Endothelial cell of umbilical vein (primary cell): ENCODE measurements at regions of chr17 and their contacts with region 1.

Region 1: GRCh38 chr17:39547713-39548478 is 59.8 kb downstream of the NEUROD2 start:
- DNase-seq: peak; percentile 64
- H3K4me3 ChIP-seq: no peak overlapping the region
- H3K27ac ChIP-seq: no peak overlapping the region
- H3K4me1 ChIP-seq: peaks cover 6% of the 10 kb centered on the region
- H3K27me3 ChIP-seq: no peaks in the 10 kb centered on the region
- CTCF ChIP-seq: peak; percentile 85 to 95
- POLR2A ChIP-seq: no peak

Region 2: DNA sequence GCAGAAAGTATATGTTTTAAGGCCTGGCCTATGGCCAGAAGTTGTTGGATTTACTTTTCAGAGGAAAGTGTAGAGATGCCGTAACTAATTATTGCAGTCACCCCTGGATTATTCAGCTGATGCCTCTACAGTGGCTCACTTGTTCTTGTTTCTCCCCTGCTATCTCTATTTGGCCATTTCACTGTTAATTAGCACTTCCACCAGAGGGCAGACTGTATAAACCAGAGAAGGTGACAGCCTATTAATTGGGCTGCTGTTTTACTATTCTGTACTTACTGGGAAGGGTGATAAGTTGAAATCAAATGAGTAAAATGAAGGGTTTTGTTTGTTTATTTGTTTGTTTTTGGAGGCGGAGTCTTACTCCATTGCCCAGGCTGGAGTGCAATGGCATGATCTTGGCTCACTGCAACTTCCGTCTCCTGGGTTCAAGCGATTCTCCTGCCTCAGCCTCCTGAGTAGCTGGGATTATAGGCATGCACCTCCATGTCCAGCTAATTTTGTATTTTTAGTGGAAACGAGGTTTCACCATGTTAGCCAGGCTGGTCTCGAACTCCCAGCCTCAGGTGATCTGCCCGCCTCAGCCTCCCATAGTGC is 20.6 kb before region 1 on chr17:
- CTCF ChIA-PET with region 1: interaction called, 11 read pairs
- POLR2A ChIA-PET with region 1: no interaction called
- dilution Hi-C with region 1: no loop called
- intact Hi-C with region 1: no loop called
- DNase-seq: peak; percentile 56
- H3K4me3 ChIP-seq: no peak overlapping the region
- H3K27ac ChIP-seq: no peak overlapping the region
- H3K4me1 ChIP-seq: peaks cover 9% of the 10 kb centered on the region
- H3K27me3 ChIP-seq: no peaks in the 10 kb centered on the region
- CTCF ChIP-seq: peak; percentile 36 to 49
- POLR2A ChIP-seq: no peak

Region 3: DNA sequence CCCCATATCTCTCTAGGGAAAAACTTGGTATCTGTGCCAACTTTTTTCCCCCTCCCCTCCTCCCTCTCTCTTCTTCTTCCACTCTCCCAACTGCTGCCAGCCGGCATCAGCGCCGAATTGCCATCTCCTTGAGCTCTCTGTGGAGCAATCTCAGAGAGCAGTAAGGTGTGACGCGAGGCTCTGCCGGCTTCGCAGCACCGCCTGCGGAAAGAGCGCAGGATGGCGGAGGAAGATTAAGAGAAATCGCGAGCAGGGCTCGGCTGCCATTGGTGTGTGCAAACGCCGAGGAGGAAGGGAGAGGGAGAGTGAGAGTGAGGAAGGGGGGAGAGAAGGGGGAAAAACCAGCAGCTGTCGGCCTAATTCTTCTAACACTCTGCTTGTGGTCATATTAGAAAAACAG is 15.6 kb after region 1 on chr17:
- CTCF ChIA-PET with region 1: interaction called, 17 read pairs
- POLR2A ChIA-PET with region 1: no interaction called
- dilution Hi-C with region 1: no loop called
- intact Hi-C with region 1: no loop called
- DNase-seq: peak; percentile 14
- H3K4me3 ChIP-seq: no peak overlapping the region
- H3K27ac ChIP-seq: no peak overlapping the region
- H3K4me1 ChIP-seq: no peaks in the 10 kb centered on the region
- H3K27me3 ChIP-seq: no peaks in the 10 kb centered on the region
- CTCF ChIP-seq: no peak
- POLR2A ChIP-seq: no peak

Region 4: DNA sequence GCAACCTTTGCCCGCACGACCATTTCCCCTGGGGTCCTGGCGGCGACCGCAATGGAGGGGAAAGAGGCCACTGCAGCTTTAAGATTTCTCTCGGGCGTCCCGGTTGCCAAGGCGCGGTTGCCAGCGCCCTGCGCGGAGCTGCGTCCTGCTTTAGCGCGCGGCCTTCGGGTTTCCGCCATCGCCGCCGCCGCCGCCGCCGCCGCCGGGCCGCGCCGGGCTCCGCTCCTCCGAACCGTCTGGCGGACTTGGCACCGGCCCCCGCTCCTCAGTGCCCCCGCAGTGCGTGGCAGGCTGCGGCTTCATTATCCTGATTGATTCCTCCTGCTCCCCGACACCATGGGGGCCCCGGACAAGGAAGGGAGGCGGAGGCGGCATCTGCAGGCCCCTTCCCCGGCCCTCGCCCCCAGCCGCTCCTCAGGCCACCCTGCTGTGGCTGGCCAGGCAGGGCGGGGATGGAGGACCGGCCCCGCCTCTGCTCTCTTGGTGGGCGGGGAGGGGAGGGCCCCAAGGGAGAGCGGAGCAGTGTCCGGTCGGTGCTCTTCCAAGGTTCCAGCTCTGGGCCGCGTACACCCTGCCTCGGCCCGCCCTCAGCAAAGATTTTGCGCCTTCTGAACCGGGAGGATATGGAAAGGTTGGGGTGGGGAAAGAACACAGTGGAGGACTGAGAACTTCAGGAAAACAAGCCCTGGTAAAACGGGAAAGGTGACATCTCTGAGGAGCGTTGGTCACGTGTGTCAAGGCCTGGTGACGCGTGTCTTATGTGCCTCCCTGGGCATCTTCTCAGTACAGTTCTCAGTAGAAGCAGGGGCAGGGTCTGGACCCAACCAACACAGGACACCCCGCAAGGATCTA is 25.8 kb after region 1 on chr17:
- CTCF ChIA-PET with region 1: interaction called, 29 read pairs
- POLR2A ChIA-PET with region 1: no interaction called
- dilution Hi-C with region 1: no loop called
- intact Hi-C with region 1: loop called (anchors 2 kb)
- DNase-seq: peak; percentile 77
- H3K4me3 ChIP-seq: peak overlapping the region; percentile 9 to 67 (median 35)
- H3K27ac ChIP-seq: no peak overlapping the region
- H3K4me1 ChIP-seq: peaks cover 5% of the 10 kb centered on the region
- H3K27me3 ChIP-seq: peaks cover 0 to 2% of the 10 kb centered on the region in 2 experiments
- CTCF ChIP-seq: no peak
- POLR2A ChIP-seq: peak; percentile 59

Region 5: GRCh38 chr17:39579318-39580081 is 31.6 kb after region 1 on chr17:
- CTCF ChIA-PET with region 1: interaction called, 29 read pairs
- POLR2A ChIA-PET with region 1: no interaction called
- dilution Hi-C with region 1: no loop called
- intact Hi-C with region 1: no loop called
- DNase-seq: peak; percentile 39
- H3K4me3 ChIP-seq: no peak overlapping the region
- H3K27ac ChIP-seq: no peak overlapping the region
- H3K4me1 ChIP-seq: peaks cover 3% of the 10 kb centered on the region
- H3K27me3 ChIP-seq: peaks cover 8 to 10% of the 10 kb centered on the region in 2 experiments
- CTCF ChIP-seq: no peak
- POLR2A ChIP-seq: no peak

Region 6: GRCh38 chr17:39653662-39654331 is 105.9 kb after region 1 on chr17:
- CTCF ChIA-PET with region 1: interaction called, 10 read pairs
- POLR2A ChIA-PET with region 1: no interaction called
- dilution Hi-C with region 1: no loop called
- intact Hi-C with region 1: no loop called
- DNase-seq: peak; percentile 35
- H3K4me3 ChIP-seq: no peak overlapping the region
- H3K27ac ChIP-seq: no peak overlapping the region
- H3K4me1 ChIP-seq: peaks cover 1% of the 10 kb centered on the region
- H3K27me3 ChIP-seq: no peaks in the 10 kb centered on the region
- CTCF ChIP-seq: peak; percentile 93 to 96
- POLR2A ChIP-seq: no peak

Region 7: GRCh38 chr17:39754161-39754951 is 206.5 kb after region 1 on chr17:
- CTCF ChIA-PET with region 1: interaction called, 10 read pairs
- POLR2A ChIA-PET with region 1: no interaction called
- dilution Hi-C with region 1: no loop called
- intact Hi-C with region 1: loop called (anchors 1 kb)
- DNase-seq: peak; percentile 69
- H3K4me3 ChIP-seq: peak overlapping the region; percentile 54 to 71 (median 60)
- H3K27ac ChIP-seq: no peak overlapping the region
- H3K4me1 ChIP-seq: peaks cover 9% of the 10 kb centered on the region
- H3K27me3 ChIP-seq: peaks cover 8 to 15% of the 10 kb centered on the region in 2 experiments
- CTCF ChIP-seq: peak; percentile 77 to 85
- POLR2A ChIP-seq: peak; percentile 62